SK-N-SH (cell line): ENCODE measurements at regions of chr16 and their contacts with region 1.

Region 1: GRCh38 chr16:29973384-29974246 is at the start of gene TAOK2:
- DNase-seq: peak; percentile 99
- H3K4me3 ChIP-seq: peak within 1 kb of the TSS; percentile 87 to 91
- H3K27ac ChIP-seq: peak within 1 kb of the TSS; percentile 69 to 88
- H3K4me1 ChIP-seq: peaks cover 20 to 25% of the 10 kb centered on the region in 2 experiments; a peak in 3 of 4 replicates
- H3K27me3 ChIP-seq: no peaks in the 10 kb centered on the region
- CTCF ChIP-seq: no peak
- EP300 ChIP-seq: peak in 1 of 2 experiments; percentile 75; a peak in 3 of 4 replicates
- RAD21 ChIP-seq: no peak
- polyA plus RNA-seq, gene TAOK2: 21.9 and 23.1 TPM in 2 replicates

Region 2: GRCh38 chr16:29645694-29646187 is 327.9 kb before region 1 on chr16:
- CTCF ChIA-PET with region 1: no interaction called
- POLR2A ChIA-PET with region 1: no interaction called
- DNase-seq: peak; percentile 63
- H3K4me3 ChIP-seq: no peak overlapping the region
- H3K27ac ChIP-seq: no peak overlapping the region
- H3K4me1 ChIP-seq: no peaks in the 10 kb centered on the region
- H3K27me3 ChIP-seq: no peaks in the 10 kb centered on the region
- CTCF ChIP-seq: no peak
- EP300 ChIP-seq: no peak
- RAD21 ChIP-seq: no peak

Region 3: DNA sequence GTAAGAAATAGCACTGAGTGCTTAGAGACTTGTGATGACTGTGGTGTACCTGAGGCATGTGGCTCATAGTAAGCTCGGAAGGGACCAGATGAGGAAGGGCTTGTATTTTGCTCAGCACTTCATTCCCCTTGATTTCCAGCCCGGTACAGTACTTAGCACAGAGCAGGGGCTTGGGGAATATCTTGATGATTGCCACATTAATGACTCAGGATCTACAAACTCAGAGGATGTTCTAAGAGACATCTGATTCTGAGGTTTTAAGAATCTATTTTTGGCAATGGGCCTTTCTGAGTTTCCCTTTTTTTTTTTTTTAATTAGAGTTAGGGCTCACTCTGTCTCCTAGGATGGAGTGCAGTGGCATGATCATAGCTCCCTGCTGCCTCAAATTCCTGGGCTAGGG is 64.2 kb before region 1 on chr16:
- CTCF ChIA-PET with region 1: no interaction called
- POLR2A ChIA-PET with region 1: no interaction called
- DNase-seq: no peak
- H3K4me3 ChIP-seq: no peak overlapping the region
- H3K27ac ChIP-seq: peak overlapping the region in 1 of 2 experiments; percentile 9; a peak in 1 of 4 replicates
- H3K4me1 ChIP-seq: no peaks in the 10 kb centered on the region
- H3K27me3 ChIP-seq: no peaks in the 10 kb centered on the region
- CTCF ChIP-seq: no peak
- EP300 ChIP-seq: no peak
- RAD21 ChIP-seq: no peak

Region 4: DNA sequence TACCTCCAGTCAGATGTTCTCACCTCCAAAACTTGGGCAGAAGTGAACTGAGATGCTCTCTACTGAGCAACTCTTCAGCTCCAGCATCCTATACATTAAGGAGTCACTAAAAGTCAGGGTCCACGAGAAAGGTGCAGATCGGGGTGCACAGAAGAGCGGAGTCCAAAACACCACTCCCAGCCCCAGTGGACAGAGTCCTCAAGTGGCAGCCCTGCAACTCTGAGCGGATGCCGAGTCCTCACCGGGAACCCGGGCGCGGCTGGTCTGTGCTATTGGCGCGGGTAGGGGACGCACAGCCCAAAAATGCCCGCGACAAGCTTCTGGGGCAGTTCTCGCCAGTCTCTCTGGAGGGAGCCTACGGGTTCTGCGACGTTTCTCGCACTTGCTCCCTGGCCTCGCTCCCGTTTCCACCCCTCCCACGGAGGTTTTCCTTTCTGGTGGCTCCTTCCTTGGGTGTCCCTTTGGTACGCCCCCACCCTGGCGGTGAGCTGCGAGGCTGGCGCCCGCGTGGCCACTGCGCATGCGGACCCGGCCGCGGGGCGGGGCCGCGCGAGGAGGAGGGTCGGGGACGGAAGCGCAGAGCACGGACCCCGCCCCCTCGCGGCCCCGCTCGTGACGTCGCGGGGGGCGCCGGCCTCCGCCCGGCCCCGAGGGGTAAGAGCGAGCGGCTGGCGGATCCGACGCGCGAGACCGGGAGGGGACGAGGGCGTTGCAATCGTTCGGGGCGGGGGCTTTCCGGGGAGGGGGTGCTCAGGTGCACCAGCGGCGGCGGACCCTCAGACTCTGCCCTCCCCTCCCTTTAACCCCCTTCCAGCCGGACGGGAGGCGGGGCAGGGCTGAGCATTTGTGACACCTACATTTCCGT is 11.9 kb before region 1 on chr16 and contains the start of gene TMEM219:
- CTCF ChIA-PET with region 1: interaction called, 6 read pairs
- POLR2A ChIA-PET with region 1: interaction called, 10 read pairs
- DNase-seq: peak; percentile 99
- H3K4me3 ChIP-seq: peak within 1 kb of the TSS; percentile 66 to 78
- H3K27ac ChIP-seq: peak within 1 kb of the TSS; percentile 69 to 88
- H3K4me1 ChIP-seq: peaks cover 0 to 15% of the 10 kb centered on the region in 2 experiments; a peak in 1 of 4 replicates
- H3K27me3 ChIP-seq: no peaks in the 10 kb centered on the region
- CTCF ChIP-seq: peak; percentile 43
- EP300 ChIP-seq: peak in 1 of 2 experiments; percentile 26; a peak in 1 of 4 replicates
- RAD21 ChIP-seq: no peak
- polyA plus RNA-seq, gene TMEM219: 95.0 and 101 TPM in 2 replicates

Region 5: GRCh38 chr16:29987371-29988085 is 13.9 kb after region 1 on chr16:
- CTCF ChIA-PET with region 1: interaction called, 13 read pairs
- POLR2A ChIA-PET with region 1: interaction called, 7 read pairs
- DNase-seq: no peak
- H3K4me3 ChIP-seq: no peak overlapping the region
- H3K27ac ChIP-seq: no peak overlapping the region
- H3K4me1 ChIP-seq: no peaks in the 10 kb centered on the region
- H3K27me3 ChIP-seq: no peaks in the 10 kb centered on the region
- CTCF ChIP-seq: no peak
- EP300 ChIP-seq: no peak
- RAD21 ChIP-seq: no peak

Region 6: GRCh38 chr16:30005341-30006094 is 31.9 kb after region 1 on chr16:
- CTCF ChIA-PET with region 1: interaction called, 41 read pairs
- POLR2A ChIA-PET with region 1: no interaction called
- DNase-seq: peak; percentile 91
- H3K4me3 ChIP-seq: no peak overlapping the region; a peak in 1 of 4 replicates
- H3K27ac ChIP-seq: no peak overlapping the region; a peak in 1 of 4 replicates
- H3K4me1 ChIP-seq: peaks cover 0 to 1% of the 10 kb centered on the region in 2 experiments; a peak in 1 of 4 replicates
- H3K27me3 ChIP-seq: no peaks in the 10 kb centered on the region
- CTCF ChIP-seq: peak; percentile 86
- EP300 ChIP-seq: no peak
- RAD21 ChIP-seq: peak; percentile 59